K562 (cell line): ENCODE measurements at regions of chr1 and their contacts with region 1.

Region 1: GRCh38 chr1:23436520-23437354 is 12.2 kb upstream of the TCEA3 start:
- DNase-seq: peak; percentile 85 to 100 (median 98)
- ATAC-seq: peak; percentile 100
- H3K4me3 ChIP-seq: no peak overlapping the region; the same call in 1 of the 2 replicates
- H3K27ac ChIP-seq: peak overlapping the region; percentile 62; the same call in 2 of the 3 replicates
- H3K4me1 ChIP-seq: peaks cover 7 to 19% of the 10 kb centered on the region in 2 experiments; a peak in 4 of 5 replicates
- H3K27me3 ChIP-seq: no peaks in the 10 kb centered on the region
- CTCF ChIP-seq: no peak
- EP300 ChIP-seq: no peak
- POLR2A ChIP-seq: no peak
- RAD21 ChIP-seq: no peak

Region 2: GRCh38 chr1:23422241-23423030 is 14.3 kb before region 1 on chr1:
- CTCF ChIA-PET with region 1: no interaction called
- POLR2A ChIA-PET with region 1: interaction called, 12 read pairs
- in situ Hi-C with region 1: no loop called
- intact Hi-C with region 1: no loop called
- DNase-seq: peak; percentile 76 to 82 (median 77)
- ATAC-seq: peak; percentile 85
- H3K4me3 ChIP-seq: no peak overlapping the region
- H3K27ac ChIP-seq: peak overlapping the region; percentile 60
- H3K4me1 ChIP-seq: peaks cover 22 to 31% of the 10 kb centered on the region in 2 experiments
- H3K27me3 ChIP-seq: no peaks in the 10 kb centered on the region
- CTCF ChIP-seq: no peak
- EP300 ChIP-seq: no peak
- POLR2A ChIP-seq: peak; percentile 55
- RAD21 ChIP-seq: no peak